Left colon (tissue), 2 donors: ENCODE measurements at regions of chr3 and their contacts with region 1.

Region 1: DNA sequence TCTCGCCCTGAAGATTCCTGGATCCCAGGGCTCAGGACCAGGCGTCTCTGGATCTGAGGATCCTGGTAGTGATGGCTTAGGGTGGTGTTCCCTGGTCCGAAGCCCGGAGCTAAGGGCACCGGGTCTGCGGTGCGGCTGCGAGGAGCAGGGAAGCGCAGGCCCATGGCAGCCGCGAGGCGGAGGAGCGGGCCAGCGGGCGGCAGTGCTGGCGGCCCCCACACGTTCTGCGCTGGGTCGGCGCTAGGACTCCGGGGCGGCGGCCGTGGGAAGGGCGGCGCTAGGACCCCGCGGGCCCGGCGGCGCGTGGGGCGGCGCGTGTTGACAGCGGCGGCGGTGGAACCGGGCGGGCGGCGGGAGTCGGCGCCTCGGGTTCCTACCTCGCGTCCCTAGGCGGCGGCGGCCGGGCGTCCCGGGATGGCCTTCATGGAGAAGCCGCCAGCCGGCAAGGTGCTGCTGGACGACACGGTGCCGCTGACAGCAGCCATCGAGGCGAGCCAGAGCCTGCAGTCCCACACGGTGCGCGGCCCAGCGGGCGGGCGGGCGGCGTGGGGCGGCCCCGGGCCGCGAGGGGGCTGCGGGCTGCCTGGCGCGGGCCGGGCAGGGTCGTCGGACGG is at the start of gene PXK:
- DNase-seq: peak; percentile 69 to 88
- ATAC-seq: peak; percentile 95
- total RNA-seq, gene PXK: 10.2 to 12.6 TPM

Region 2: DNA sequence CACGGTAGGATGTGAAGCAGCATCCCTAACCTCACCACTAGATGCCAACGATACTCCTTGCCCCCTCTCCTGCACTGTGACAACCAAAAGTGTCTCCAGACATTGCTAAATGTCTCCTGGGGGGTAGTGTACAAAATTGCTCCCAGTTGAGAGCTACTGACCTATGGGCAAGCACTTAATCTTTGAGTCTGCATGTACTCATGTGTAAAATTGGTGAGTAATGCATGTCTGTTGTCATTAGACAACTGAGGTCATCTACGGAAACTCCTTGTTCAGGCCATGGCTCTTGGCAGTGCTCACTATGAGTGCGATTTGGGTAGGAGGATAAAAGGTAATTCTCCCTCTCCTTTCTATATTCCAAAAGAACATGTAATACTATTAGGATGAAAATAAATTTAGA is 71.7 kb after region 1 on chr3:
- intact Hi-C with region 1: no loop called
- DNase-seq: no peak
- ATAC-seq: no peak

Region 3: GRCh38 chr3:58491506-58492402 is 159.1 kb after region 1 on chr3 and contains the start of gene KCTD6:
- intact Hi-C with region 1: loop called in 1 of 2 experiments (anchors 5 kb)
- DNase-seq: peak; percentile 89 to 95
- ATAC-seq: peak; percentile 92
- total RNA-seq, gene KCTD6: 5.7 to 6.3 TPM